SK-N-SH (cell line): ENCODE measurements at regions of chr3 and their contacts with region 1.

Region 1: DNA sequence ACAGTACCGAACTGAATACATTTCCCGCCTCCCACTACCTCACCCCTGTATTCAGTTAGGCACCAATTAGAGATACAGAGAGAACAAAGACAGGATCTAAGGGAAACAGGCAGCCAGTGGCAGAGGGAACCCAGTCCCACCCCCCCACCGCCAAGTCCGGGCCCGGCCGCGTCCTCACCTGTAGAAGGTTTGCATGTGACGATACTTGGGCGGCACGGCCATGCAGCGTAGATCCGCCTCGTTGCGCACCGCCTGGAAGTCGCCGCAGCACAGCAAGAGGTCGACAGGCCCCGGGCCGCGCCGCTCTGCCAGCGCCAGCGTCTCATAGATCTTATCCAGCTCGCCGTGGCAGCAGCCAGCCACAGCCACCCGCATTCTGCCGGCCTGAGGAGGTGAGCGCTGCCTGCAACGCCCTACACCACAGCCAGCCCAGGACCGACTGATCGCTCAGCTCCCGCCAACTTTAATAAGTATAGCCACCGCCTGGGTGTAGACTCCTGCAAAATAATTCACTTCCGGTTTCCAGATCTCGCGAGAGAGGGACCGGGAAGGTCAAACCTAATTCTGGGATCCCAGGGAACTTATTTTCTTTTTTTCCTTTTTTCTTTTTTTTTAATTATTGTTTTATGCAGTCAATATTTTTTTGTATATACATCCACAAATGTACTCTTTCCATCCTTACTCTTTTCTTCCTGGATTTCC is at the start of gene DBR1:
- DNase-seq: peak; percentile 86
- H3K4me3 ChIP-seq: peak within 1 kb of the TSS; percentile 58 to 79
- H3K27ac ChIP-seq: peak within 1 kb of the TSS; percentile 68
- H3K4me1 ChIP-seq: peaks cover 0 to 8% of the 10 kb centered on the region in 2 experiments; a peak in 2 of 4 replicates
- H3K27me3 ChIP-seq: no peaks in the 10 kb centered on the region
- CTCF ChIP-seq: no peak
- EP300 ChIP-seq: no peak
- RAD21 ChIP-seq: no peak
- polyA plus RNA-seq, gene DBR1: 9.2 and 10.1 TPM in 2 replicates

Region 2: GRCh38 chr3:138125548-138126221 is 48.9 kb before region 1 on chr3:
- CTCF ChIA-PET with region 1: interaction called, 3 read pairs
- POLR2A ChIA-PET with region 1: interaction called, 14 read pairs
- DNase-seq: peak; percentile 70
- H3K4me3 ChIP-seq: no peak overlapping the region
- H3K27ac ChIP-seq: peak overlapping the region; percentile 41 to 89; a peak in 3 of 4 replicates
- H3K4me1 ChIP-seq: peaks cover 9 to 15% of the 10 kb centered on the region in 2 experiments; a peak in 3 of 4 replicates
- H3K27me3 ChIP-seq: no peaks in the 10 kb centered on the region
- CTCF ChIP-seq: no peak
- EP300 ChIP-seq: 0 out of 4 replicates have a peak, but pooled peaks of 1 of the 2 experiments have one; percentile 8
- RAD21 ChIP-seq: no peak

Region 3: GRCh38 chr3:138186803-138187295 is 12.3 kb after region 1 on chr3:
- CTCF ChIA-PET with region 1: interaction called, 4 read pairs
- POLR2A ChIA-PET with region 1: interaction called, 16 read pairs
- DNase-seq: peak; percentile 97
- H3K4me3 ChIP-seq: peak overlapping the region; percentile 84 to 97
- H3K27ac ChIP-seq: peak overlapping the region; percentile 89 to 99
- H3K4me1 ChIP-seq: peaks cover 4 to 7% of the 10 kb centered on the region in 2 experiments; a peak in 2 of 4 replicates
- H3K27me3 ChIP-seq: no peaks in the 10 kb centered on the region
- CTCF ChIP-seq: no peak
- EP300 ChIP-seq: no peak
- RAD21 ChIP-seq: no peak

Region 4: DNA sequence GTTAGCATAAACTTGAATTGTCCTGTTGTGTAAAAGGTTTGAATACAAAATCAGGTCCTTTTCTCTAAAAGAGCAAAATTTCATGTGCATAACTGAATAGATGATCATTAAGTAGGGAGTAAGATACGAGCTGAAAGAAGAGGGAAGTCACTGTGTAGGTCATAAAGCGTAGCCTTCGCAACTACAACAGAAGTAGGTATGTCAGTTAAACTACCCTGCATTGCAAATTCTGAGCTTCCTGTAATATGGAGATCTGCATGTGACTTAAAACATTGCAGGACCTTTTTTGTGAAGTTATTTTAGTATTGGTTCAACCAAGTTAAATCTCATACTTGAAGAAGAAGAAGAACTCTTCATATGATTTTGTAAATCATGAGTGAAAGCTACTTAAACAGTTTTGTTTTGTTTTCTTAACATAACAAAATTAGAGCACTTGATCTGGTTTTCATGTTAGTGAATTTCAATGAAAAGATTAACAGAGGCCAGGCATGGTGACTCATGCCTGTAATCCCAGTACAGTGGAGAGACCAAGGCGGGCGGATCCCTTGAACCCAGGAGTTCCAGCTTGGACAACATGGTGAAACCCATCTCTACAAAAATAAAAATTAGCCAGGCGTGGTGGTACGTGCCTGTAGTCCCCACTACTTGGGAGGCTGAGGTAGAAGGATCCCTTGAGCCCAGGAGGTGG is 39.0 kb after region 1 on chr3:
- CTCF ChIA-PET with region 1: no interaction called
- POLR2A ChIA-PET with region 1: no interaction called
- DNase-seq: no peak
- H3K4me3 ChIP-seq: no peak overlapping the region
- H3K27ac ChIP-seq: no peak overlapping the region
- H3K4me1 ChIP-seq: 0 out of 4 replicates have a peak, but pooled peaks cover 0 to 10% of the 10 kb centered on the region in 2 experiments
- H3K27me3 ChIP-seq: no peaks in the 10 kb centered on the region
- CTCF ChIP-seq: no peak
- EP300 ChIP-seq: no peak
- RAD21 ChIP-seq: no peak

Region 5: GRCh38 chr3:138281561-138281960 is 107.0 kb after region 1 on chr3:
- CTCF ChIA-PET with region 1: no interaction called
- POLR2A ChIA-PET with region 1: no interaction called
- DNase-seq: no peak
- H3K4me3 ChIP-seq: no peak overlapping the region
- H3K27ac ChIP-seq: no peak overlapping the region
- H3K4me1 ChIP-seq: no peaks in the 10 kb centered on the region
- H3K27me3 ChIP-seq: no peaks in the 10 kb centered on the region
- CTCF ChIP-seq: no peak
- EP300 ChIP-seq: no peak
- RAD21 ChIP-seq: no peak